ENCODE measurements at regions of chrX and their contacts with region 1.

Region 1: GRCh38 chrX:110407910-110408545 is 49.4 kb downstream of the RTL9 start:
- DNase-seq: peak; percentile 36
- ATAC-seq: no peak
- H3K4me3 Mint-ChIP-seq: no peak overlapping the region
- H3K27ac Mint-ChIP-seq: no peak overlapping the region
- H3K4me1 Mint-ChIP-seq: peaks cover 1% of the 10 kb centered on the region
- H3K27me3 Mint-ChIP-seq: no peaks in the 10 kb centered on the region
- CTCF ChIP-seq: peak; percentile 67

Region 2: GRCh38 chrX:110156167-110156754 is 251.8 kb before region 1 on chrX:
- CTCF ChIA-PET with region 1: interaction called, 449 read pairs
- POLR2A ChIA-PET with region 1: interaction called, 3 read pairs
- intact Hi-C with region 1: loop called (anchors 2 kb)
- DNase-seq: no peak
- ATAC-seq: no peak
- H3K4me3 Mint-ChIP-seq: no peak overlapping the region
- H3K27ac Mint-ChIP-seq: no peak overlapping the region
- H3K4me1 Mint-ChIP-seq: peaks cover 10% of the 10 kb centered on the region
- H3K27me3 Mint-ChIP-seq: no peaks in the 10 kb centered on the region
- CTCF ChIP-seq: peak; percentile 59

Region 3: DNA sequence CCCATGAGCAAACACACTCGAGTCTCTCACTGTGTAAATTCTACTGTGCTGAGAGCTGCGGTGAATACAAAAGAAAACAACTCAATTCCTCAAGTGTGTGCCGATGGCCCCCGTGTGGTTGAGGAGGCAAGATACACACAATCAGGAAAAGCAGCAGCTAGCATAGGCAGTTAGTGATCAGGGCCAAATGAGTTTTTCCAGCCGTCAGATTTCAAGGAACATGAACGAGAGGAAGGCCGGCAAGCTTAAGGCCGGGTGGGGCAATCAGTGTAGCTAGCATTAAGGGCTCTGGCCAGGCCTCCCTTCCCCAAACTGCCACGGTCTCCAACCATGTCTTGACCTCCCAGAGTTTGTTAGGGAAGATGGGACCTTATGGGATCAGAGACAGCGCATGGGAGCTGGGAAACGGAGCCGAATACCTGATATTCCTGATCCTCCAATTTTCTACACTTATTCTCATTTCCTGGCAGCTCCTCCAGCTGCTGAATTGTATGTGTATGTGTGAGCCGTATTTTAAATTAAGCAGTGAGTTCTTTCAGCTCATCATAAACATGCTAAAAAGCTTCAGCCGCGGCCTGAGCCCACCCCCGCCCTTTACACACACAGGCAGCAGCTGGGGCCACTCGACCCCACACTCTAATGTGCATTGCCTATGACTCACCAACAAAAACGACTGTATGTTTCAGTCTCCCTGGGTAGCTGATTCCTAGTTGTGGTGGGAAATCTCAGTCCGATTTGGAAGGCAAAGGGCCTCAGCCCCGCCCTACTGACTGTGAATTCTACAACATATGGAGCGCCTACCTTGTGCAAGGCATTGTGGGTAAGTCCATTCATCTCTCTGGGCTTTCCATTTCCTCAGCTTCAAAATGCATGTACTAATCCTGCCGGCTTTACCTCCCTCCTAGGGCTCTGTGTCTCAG is 10.5 kb after region 1 on chrX:
- CTCF ChIA-PET with region 1: interaction called, 14 read pairs
- POLR2A ChIA-PET with region 1: no interaction called
- intact Hi-C with region 1: no loop called
- DNase-seq: no peak
- ATAC-seq: no peak
- H3K4me3 Mint-ChIP-seq: no peak overlapping the region
- H3K27ac Mint-ChIP-seq: no peak overlapping the region
- H3K4me1 Mint-ChIP-seq: no peaks in the 10 kb centered on the region
- H3K27me3 Mint-ChIP-seq: peaks cover 2% of the 10 kb centered on the region
- CTCF ChIP-seq: no peak

Measured in activated CD8-positive, alpha-beta T cell treated with anti-CD3 and anti-CD28 coated beads for 36 hours (primary cell).